Right ventricle myocardium inferior (tissue), 1 donor: ENCODE measurements at regions of chr16 and their contacts with region 1.

Region 1: DNA sequence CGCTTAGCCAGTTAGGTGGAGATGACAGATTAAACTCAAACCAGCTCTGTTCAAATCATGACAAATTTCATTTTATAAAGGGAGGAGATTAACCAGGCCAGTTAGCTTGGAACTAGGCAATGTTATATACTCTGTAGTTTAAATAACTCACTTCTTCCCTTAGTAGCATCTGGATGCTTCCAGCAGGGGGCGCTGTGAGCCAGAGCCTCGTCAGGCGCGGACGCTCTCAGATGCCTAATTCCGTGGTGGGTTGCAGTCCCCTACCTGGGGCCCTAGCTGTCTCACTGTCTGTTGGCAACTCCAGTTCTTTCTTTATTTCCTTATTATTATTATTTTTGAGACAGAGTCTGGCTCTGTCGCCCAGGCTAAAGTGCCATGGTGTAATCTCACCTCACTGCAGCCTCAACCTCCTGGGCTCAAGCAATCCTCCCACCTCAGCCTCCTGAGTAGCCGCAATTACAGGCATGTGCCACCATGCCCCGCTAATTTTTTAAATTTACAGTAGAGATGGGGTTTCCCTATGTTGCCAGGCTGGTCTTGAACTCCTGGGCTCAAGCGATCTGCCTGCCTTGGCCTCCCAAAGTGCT is 17.3 kb upstream of the WFDC1 start:
- DNase-seq: peak; percentile 86
- ATAC-seq: no peak

Region 2: GRCh38 chr16:84308120-84308519 is 30.8 kb after region 1 on chr16:
- intact Hi-C with region 1: loop called (anchors 2 kb)
- DNase-seq: no peak
- ATAC-seq: peak; percentile 70